Activated T-helper 1 cell treated with anti-CD3 and anti-CD28 coated beads, Interleukin-12 subunit alpha, Interleukin-12 subunit beta, Interleukin-2, Interleukin-4 antibody, amounts not matched to agents 30 ng/mL and 10 ng/mL and 1 ng/mL, durations not matched to agents 14 hours and 24 hours and 36 hours (primary cell): ENCODE measurements at regions of chr9 and their contacts with region 1.

Region 1: GRCh38 chr9:83707768-83708514 is at the start of gene UBQLN1:
- DNase-seq: peak; percentile 89
- H3K4me3 Mint-ChIP-seq: peak within 1 kb of the TSS; percentile 87
- H3K27ac Mint-ChIP-seq: peak within 1 kb of the TSS; percentile 96
- H3K4me1 Mint-ChIP-seq: peaks cover 36% of the 10 kb centered on the region
- H3K27me3 Mint-ChIP-seq: no peaks in the 10 kb centered on the region
- total RNA-seq, gene UBQLN1: 142 and 143 TPM in 2 replicates

Region 2: GRCh38 chr9:83622939-83623678 is 84.8 kb before region 1 on chr9 and contains the start of gene IDNK:
- intact Hi-C with region 1: loop called (anchors 1 kb)
- DNase-seq: peak; percentile 60
- H3K4me3 Mint-ChIP-seq: peak within 1 kb of the TSS; percentile 91
- H3K27ac Mint-ChIP-seq: peak within 1 kb of the TSS; percentile 97
- H3K4me1 Mint-ChIP-seq: peaks cover 44% of the 10 kb centered on the region
- H3K27me3 Mint-ChIP-seq: peaks cover 10% of the 10 kb centered on the region
- total RNA-seq, gene IDNK: 4.5 and 6.3 TPM in 2 replicates

Region 3: DNA sequence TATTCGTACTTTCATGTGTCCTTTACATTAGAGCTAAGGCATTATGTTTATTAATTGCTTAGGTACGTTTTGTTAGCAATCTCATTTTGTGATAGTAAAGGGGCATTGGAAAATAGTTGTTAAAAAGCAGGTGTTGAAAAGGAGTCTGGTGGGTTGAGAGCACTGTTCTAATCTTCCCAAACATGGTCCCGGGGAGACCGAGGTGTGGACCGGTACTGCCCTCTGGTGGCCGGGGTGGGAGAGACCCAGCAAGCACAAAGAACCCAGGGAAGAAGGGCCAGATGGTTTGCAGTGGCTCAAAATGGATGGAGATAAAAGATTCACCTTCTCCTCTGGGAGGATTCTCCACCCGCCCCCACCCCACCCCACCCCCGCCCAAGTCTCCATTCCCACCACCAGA is 58.9 kb before region 1 on chr9:
- intact Hi-C with region 1: loop called (anchors 2 kb)
- DNase-seq: peak; percentile 56
- H3K4me3 Mint-ChIP-seq: no peak overlapping the region
- H3K27ac Mint-ChIP-seq: peak overlapping the region; percentile 34
- H3K4me1 Mint-ChIP-seq: no peaks in the 10 kb centered on the region
- H3K27me3 Mint-ChIP-seq: no peaks in the 10 kb centered on the region

Region 4: DNA sequence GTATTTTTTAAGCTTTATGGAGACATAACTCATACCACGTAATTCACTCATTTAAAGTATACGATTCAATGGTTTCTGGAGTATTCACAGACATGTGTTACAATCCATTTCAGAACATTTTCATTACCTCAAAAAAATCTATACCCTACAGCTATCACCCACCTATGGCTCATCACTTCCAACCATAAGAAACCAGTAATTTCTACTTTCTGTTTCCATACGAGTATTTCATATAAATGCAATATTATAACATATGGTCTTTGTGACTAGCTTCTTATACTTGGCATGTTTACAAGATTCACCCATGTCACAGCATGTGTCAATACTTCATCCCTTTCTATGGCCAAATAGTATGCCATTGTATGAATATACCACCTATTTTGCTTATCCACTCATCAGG is 19.0 kb before region 1 on chr9:
- intact Hi-C with region 1: loop called (anchors 1 kb)
- DNase-seq: no peak
- H3K4me3 Mint-ChIP-seq: no peak overlapping the region
- H3K27ac Mint-ChIP-seq: no peak overlapping the region
- H3K4me1 Mint-ChIP-seq: peaks cover 55% of the 10 kb centered on the region
- H3K27me3 Mint-ChIP-seq: no peaks in the 10 kb centered on the region

Region 5: GRCh38 chr9:83722686-83723085 is 14.7 kb after region 1 on chr9:
- intact Hi-C with region 1: no loop called
- DNase-seq: no peak
- H3K4me3 Mint-ChIP-seq: no peak overlapping the region
- H3K27ac Mint-ChIP-seq: no peak overlapping the region
- H3K4me1 Mint-ChIP-seq: no peaks in the 10 kb centered on the region
- H3K27me3 Mint-ChIP-seq: peaks cover 3% of the 10 kb centered on the region

Region 6: GRCh38 chr9:84759300-84759750 is 1051.4 kb after region 1 on chr9:
- intact Hi-C with region 1: loop called (anchors 10 kb)
- DNase-seq: peak; percentile 49
- H3K4me3 Mint-ChIP-seq: peak overlapping the region; percentile 59
- H3K27ac Mint-ChIP-seq: peak overlapping the region; percentile 83
- H3K4me1 Mint-ChIP-seq: peaks cover 55% of the 10 kb centered on the region
- H3K27me3 Mint-ChIP-seq: no peaks in the 10 kb centered on the region